GM12878 (cell line): ENCODE measurements at regions of chr17 and their contacts with region 1.

Region 1: DNA sequence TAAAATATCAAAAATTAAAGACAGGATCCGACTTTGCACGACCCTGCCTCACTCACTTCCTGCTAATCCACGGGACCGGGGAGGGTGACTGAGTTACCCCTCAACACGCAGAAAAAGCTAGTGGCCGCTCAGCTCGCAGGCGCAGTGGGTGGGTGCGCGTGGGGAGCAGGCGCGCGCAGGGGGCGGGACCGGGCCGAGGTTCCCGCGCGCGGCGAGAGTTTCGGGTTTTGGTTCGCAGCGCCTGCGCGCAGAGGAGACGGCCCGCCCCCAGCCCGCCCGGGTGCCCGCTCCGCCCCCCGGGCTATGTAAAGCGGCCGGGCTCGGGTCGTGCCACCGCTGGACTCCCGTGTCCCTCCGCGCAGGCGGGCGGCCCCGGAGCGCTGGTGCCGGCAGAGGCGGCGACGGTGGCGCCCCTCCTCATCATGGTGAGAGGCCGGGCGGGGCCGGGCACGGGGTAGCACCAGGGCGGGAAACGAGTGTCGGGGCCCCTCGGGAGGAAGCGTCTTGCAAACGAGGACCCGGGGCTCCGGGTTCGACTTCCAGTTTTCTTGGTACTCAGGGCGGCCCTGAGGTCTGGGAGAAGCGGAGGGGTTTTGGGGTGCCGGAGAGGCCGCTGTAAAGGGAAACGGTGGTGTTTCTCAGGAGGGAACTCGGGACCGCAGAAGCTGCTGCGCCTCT is at the start of gene CNP:
- DNase-seq: peak; percentile 49
- ATAC-seq: peak; percentile 91
- H3K4me3 ChIP-seq: peak within 1 kb of the TSS; percentile 79
- H3K27ac ChIP-seq: peak within 1 kb of the TSS; percentile 87
- H3K4me1 ChIP-seq: peaks cover 6% of the 10 kb centered on the region
- H3K27me3 ChIP-seq: no peaks in the 10 kb centered on the region
- CTCF ChIP-seq: no peak
- EP300 ChIP-seq: no peak
- POLR2A ChIP-seq: peak; percentile 92
- RAD21 ChIP-seq: no peak
- polyA plus RNA-seq, gene CNP: 1.8 to 4.4 TPM

Region 2: GRCh38 chr17:41918314-41919164 is 48.1 kb before region 1 on chr17 and contains the start of gene ACLY:
- CTCF ChIA-PET with region 1: interaction called, 3 read pairs
- POLR2A ChIA-PET with region 1: interaction called, 4 read pairs
- RAD21 ChIA-PET with region 1: interaction called, 15 read pairs
- SMC1A ChIA-PET with region 1: interaction called, 3 read pairs
- in situ Hi-C with region 1: no loop called
- intact Hi-C with region 1: no loop called
- DNase-seq: no peak
- ATAC-seq: peak; percentile 98
- H3K4me3 ChIP-seq: peak within 1 kb of the TSS; percentile 98
- H3K27ac ChIP-seq: peak within 1 kb of the TSS; percentile 86
- H3K4me1 ChIP-seq: peaks cover 19% of the 10 kb centered on the region
- H3K27me3 ChIP-seq: no peaks in the 10 kb centered on the region
- CTCF ChIP-seq: 0 out of 6 replicates have a peak, but pooled peaks of 1 of the 3 experiments have one; percentile 9
- EP300 ChIP-seq: no peak
- POLR2A ChIP-seq: peak; percentile 87
- RAD21 ChIP-seq: no peak
- polyA plus RNA-seq, gene ACLY: 32.6 to 39.6 TPM

Region 3: GRCh38 chr17:42101513-42102319 is 135.1 kb after region 1 on chr17:
- CTCF ChIA-PET with region 1: interaction called, 10 read pairs
- POLR2A ChIA-PET with region 1: interaction called, 3 read pairs
- RAD21 ChIA-PET with region 1: interaction called, 6 read pairs
- SMC1A ChIA-PET with region 1: interaction called, 4 read pairs
- in situ Hi-C with region 1: no loop called
- intact Hi-C with region 1: no loop called
- DNase-seq: no peak
- ATAC-seq: peak; percentile 87
- H3K4me3 ChIP-seq: no peak overlapping the region
- H3K27ac ChIP-seq: no peak overlapping the region
- H3K4me1 ChIP-seq: peaks cover 5% of the 10 kb centered on the region
- H3K27me3 ChIP-seq: peaks cover 1 to 6% of the 10 kb centered on the region in 2 experiments; a peak in 1 of 4 replicates
- CTCF ChIP-seq: peak; percentile 84 to 92 (median 92)
- EP300 ChIP-seq: no peak
- POLR2A ChIP-seq: peak; percentile 36; the same call in 1 of the 2 replicates
- RAD21 ChIP-seq: peak; percentile 81

Region 4: GRCh38 chr17:42112552-42113176 is 146.1 kb after region 1 on chr17 and contains the start of gene DHX58:
- CTCF ChIA-PET with region 1: interaction called, 116 read pairs
- POLR2A ChIA-PET with region 1: interaction called, 10 read pairs
- RAD21 ChIA-PET with region 1: interaction called, 16 read pairs
- SMC1A ChIA-PET with region 1: interaction called, 28 read pairs
- in situ Hi-C with region 1: loop called (anchors 5 kb)
- intact Hi-C with region 1: loop called (anchors 1 kb)
- DNase-seq: peak; percentile 90
- ATAC-seq: peak; percentile 85
- H3K4me3 ChIP-seq: peak within 1 kb of the TSS; percentile 79
- H3K27ac ChIP-seq: peak within 1 kb of the TSS; percentile 98
- H3K4me1 ChIP-seq: peaks cover 37% of the 10 kb centered on the region
- H3K27me3 ChIP-seq: no peaks in the 10 kb centered on the region
- CTCF ChIP-seq: no peak
- EP300 ChIP-seq: no peak
- POLR2A ChIP-seq: peak; percentile 94
- RAD21 ChIP-seq: no peak
- polyA plus RNA-seq, gene DHX58: 3.5 to 3.7 TPM

Region 5: GRCh38 chr17:42120770-42121769 is 154.5 kb after region 1 on chr17 and contains the start of gene KAT2A:
- CTCF ChIA-PET with region 1: interaction called, 116 read pairs
- POLR2A ChIA-PET with region 1: interaction called, 10 read pairs
- RAD21 ChIA-PET with region 1: interaction called, 15 read pairs
- SMC1A ChIA-PET with region 1: interaction called, 28 read pairs
- in situ Hi-C with region 1: no loop called
- intact Hi-C with region 1: loop called (anchors 1 kb)
- DNase-seq: no peak
- ATAC-seq: peak; percentile 94
- H3K4me3 ChIP-seq: peak within 1 kb of the TSS; percentile 82
- H3K27ac ChIP-seq: no peak within 1 kb of the TSS
- H3K4me1 ChIP-seq: peaks cover 5% of the 10 kb centered on the region
- H3K27me3 ChIP-seq: no peaks in the 10 kb centered on the region
- CTCF ChIP-seq: no peak
- EP300 ChIP-seq: no peak
- POLR2A ChIP-seq: peak; percentile 91
- RAD21 ChIP-seq: no peak
- polyA plus RNA-seq, gene KAT2A: 0.85 to 3.0 TPM

Region 6: GRCh38 chr17:42779936-42780850 is 813.6 kb after region 1 on chr17 and contains the start of gene WNK4:
- CTCF ChIA-PET with region 1: no interaction called
- POLR2A ChIA-PET with region 1: no interaction called
- RAD21 ChIA-PET with region 1: no interaction called
- SMC1A ChIA-PET with region 1: no interaction called
- in situ Hi-C with region 1: no loop called
- intact Hi-C with region 1: no loop called
- DNase-seq: no peak
- ATAC-seq: no peak
- H3K4me3 ChIP-seq: no peak within 1 kb of the TSS
- H3K27ac ChIP-seq: no peak within 1 kb of the TSS
- H3K4me1 ChIP-seq: peaks cover 9% of the 10 kb centered on the region
- H3K27me3 ChIP-seq: peaks cover 5 to 20% of the 10 kb centered on the region in 2 experiments
- CTCF ChIP-seq: no peak
- EP300 ChIP-seq: no peak
- POLR2A ChIP-seq: 0 out of 2 replicates have a peak, but pooled peaks have one; percentile 7
- RAD21 ChIP-seq: no peak
- polyA plus RNA-seq, gene WNK4: not detected